SK-N-SH (cell line): ENCODE measurements at regions of chr5 and their contacts with region 1.

Region 1: DNA sequence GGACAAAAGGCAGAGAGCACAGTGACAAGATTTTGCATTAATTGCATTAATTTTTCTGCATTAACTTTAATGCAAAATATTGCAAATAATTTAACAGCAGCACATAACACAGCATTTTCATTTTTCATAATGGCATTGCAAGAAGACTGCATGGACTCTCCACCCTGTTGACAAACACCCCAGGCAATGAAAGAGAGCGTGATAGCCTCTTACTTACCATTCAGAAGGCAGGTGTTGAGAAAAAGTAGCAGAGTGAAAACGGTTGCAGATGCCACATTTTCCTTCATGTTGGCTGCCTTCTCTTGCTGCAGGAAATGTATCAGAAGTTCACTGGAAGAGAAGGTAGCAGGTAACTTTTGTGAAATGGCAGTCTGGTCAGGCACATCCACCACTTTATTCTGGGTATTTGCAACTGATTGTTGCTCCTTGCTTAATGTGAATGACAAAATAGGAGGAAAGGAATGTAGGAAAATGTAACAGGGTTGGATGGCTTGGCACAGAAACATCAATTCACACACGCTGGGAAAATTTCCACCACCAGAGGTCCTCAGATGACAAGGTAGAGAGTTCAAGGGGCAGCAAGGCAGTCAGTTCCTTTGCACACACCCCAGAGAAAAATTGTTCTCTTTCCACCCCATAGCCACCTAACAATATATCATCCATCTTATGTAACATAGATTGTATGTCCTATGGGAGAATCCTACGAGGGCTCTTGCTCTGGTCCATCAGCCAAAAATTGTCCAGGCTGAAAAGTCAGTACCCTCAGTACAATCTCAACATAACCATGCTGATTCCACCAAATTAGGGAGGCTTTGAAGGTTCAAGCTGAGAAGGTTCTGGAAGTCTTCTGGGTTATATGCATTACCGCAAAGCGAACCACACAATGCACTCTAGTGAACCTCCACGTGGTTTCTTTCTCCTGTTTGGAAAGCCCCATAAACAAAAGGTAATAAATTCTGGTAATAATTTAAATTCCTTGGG is 41.9 kb upstream of the AGXT2 start:
- DNase-seq: peak; percentile 48
- H3K4me3 ChIP-seq: no peak overlapping the region; a peak in 1 of 4 replicates
- H3K27ac ChIP-seq: no peak overlapping the region
- H3K4me1 ChIP-seq: no peaks in the 10 kb centered on the region
- H3K27me3 ChIP-seq: no peaks in the 10 kb centered on the region; the same call in 1 of the 2 replicates
- CTCF ChIP-seq: peak; percentile 80
- EP300 ChIP-seq: no peak
- RAD21 ChIP-seq: peak; percentile 91

Region 2: DNA sequence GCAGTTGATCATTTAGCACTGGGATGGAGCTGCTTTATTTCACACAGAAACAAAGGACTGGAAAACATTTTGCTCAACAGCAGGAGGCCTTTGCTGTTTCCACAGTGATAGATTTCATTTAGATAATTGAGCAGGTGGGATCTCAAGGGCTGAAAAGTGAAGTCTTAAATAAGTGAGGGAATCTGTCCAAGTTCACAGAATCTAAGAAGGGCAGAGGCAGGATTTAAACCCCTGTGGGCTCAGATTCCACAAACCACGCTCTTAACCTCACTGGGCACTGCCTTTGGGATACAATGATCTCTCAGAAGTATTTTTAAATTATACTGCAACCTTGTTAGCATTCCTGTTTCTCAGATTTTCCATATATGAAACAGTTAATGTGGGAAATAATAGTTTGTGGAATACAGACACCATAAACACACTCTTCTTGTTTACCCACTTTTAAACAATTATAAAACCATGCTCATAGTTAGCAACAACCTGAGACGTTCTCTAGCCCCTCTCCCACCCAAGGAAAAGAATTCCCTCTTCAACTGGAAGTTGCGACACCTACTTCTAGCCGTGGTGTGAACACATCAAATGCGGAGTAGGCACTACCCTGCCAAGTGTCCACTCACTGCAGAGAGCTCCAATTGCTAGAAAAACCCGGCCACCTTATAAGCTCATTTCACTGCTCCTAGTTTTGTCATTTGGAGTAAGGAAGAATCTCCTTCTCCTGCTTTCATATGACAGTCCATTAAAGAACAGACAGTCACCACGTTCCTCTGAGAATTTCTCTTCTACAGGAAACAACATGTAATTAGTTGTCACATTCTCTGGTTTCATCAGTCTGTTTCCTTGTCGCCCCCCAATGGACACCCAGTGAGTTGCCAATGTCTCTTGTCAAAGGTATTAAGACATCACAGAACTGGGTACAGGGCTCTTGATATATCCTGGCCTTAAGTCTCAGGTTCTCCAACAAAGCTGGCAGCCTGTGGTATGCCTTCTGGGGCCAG is 93.2 kb after region 1 on chr5:
- CTCF ChIA-PET with region 1: interaction called, 16 read pairs
- POLR2A ChIA-PET with region 1: no interaction called
- DNase-seq: peak; percentile 31
- H3K4me3 ChIP-seq: no peak overlapping the region
- H3K27ac ChIP-seq: no peak overlapping the region
- H3K4me1 ChIP-seq: no peaks in the 10 kb centered on the region
- H3K27me3 ChIP-seq: peaks cover 8% of the 10 kb centered on the region; the same call in 1 of the 2 replicates
- CTCF ChIP-seq: peak; percentile 63
- EP300 ChIP-seq: no peak
- RAD21 ChIP-seq: peak; percentile 69

Region 3: DNA sequence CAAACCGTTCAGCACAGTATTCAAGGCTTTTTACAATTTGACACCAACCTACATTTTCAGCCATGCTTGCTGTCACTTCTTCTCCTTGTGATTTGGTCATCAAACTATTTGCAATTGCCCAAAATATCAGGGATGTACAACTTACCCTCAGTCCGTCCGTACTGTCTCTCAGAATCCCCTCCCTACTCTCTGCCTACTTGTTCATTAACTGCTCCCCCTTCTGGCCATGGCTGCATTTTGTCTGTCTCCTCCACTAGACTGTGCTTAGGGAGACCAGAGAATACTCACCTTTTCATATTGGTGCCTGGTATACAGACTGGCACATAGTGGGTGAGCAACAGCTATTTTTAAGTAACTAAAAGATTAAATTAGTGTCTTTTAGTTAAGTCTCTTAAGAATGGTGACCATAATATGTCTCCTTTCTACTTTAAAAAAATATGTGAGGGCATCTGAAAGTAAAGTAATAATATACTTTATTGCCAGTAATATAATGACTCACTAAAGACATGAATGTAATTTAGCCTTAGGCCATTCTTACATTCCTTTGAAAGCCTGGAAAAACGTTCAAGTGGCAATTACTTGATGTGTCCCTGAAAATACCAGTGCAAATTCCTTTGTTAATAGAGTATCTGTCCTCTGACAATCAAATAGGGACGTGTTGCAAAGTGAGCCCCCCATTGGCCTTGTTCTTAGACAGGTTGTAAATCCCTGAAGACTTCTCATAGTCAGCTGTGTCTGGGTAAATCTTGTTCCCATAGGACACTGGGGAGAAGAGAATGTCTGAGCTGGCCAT is 112.9 kb after region 1 on chr5:
- CTCF ChIA-PET with region 1: interaction called, 14 read pairs
- POLR2A ChIA-PET with region 1: no interaction called
- DNase-seq: peak; percentile 51
- H3K4me3 ChIP-seq: no peak overlapping the region; a peak in 1 of 4 replicates
- H3K27ac ChIP-seq: no peak overlapping the region
- H3K4me1 ChIP-seq: peaks cover 0 to 10% of the 10 kb centered on the region in 2 experiments; a peak in 1 of 4 replicates
- H3K27me3 ChIP-seq: peaks cover 7% of the 10 kb centered on the region; the same call in 1 of the 2 replicates
- CTCF ChIP-seq: peak; percentile 71
- EP300 ChIP-seq: no peak
- RAD21 ChIP-seq: peak; percentile 54